ENCODE measurements at regions of chr20 and their contacts with region 1.

Region 1: GRCh38 chr20:36886859-36887751 is 11.2 kb downstream of the TLDC2 start:
- DNase-seq: peak; percentile 83 to 84
- ATAC-seq: peak; percentile 72 to 91 (median 87)
- H3K4me3 ChIP-seq: peak overlapping the region in 1 of 10 donors; percentile 4
- H3K27ac ChIP-seq: peak overlapping the region in 2 of 10 donors; percentile 15 to 30
- H3K4me1 ChIP-seq: peaks cover 0 to 13% (median 11%) of the 10 kb centered on the region in 9 donors
- H3K27me3 ChIP-seq: no peaks in the 10 kb centered on the region
- CTCF ChIP-seq: peak; percentile 83 to 98 (median 96)

Region 2: GRCh38 chr20:36550797-36551299 is 336.3 kb before region 1 on chr20:
- intact Hi-C with region 1: loop called in 2 of 10 experiments (anchors 2 to 10 kb)
- DNase-seq: no peak
- ATAC-seq: peak; percentile 35 to 54 (median 46)
- H3K4me3 ChIP-seq: no peak overlapping the region
- H3K27ac ChIP-seq: peak overlapping the region in 9 of 10 donors; percentile 14 to 71 (median 51)
- H3K4me1 ChIP-seq: peaks cover 0 to 52% (median 16%) of the 10 kb centered on the region in 9 donors
- H3K27me3 ChIP-seq: no peaks in the 10 kb centered on the region
- CTCF ChIP-seq: no peak

Region 3: DNA sequence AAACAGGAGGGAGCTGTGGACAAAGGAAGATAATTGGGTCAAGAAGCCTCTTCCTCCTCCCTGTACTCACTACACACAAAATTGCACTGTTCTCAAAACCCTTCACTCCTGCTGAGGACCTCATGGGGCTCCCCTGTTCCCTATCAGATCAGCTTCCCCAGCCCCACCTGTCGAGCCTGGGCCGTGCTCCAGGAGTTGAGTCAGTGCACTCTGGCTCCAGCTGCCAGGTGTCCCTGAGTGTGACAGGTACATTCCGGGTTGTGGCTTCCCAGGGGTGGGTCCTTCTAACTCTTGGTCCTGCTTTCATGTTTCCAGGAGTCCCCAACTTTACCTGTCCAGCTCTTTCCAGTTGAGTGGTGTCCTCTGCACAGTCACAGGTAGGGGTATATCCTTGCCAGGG is 273.1 kb before region 1 on chr20:
- intact Hi-C with region 1: loop called in 4 of 10 experiments (anchors 5 to 10 kb)
- DNase-seq: no peak
- ATAC-seq: no peak
- H3K4me3 ChIP-seq: no peak overlapping the region
- H3K27ac ChIP-seq: no peak overlapping the region
- H3K4me1 ChIP-seq: peaks cover 0 to 7% (median 0%) of the 10 kb centered on the region in 9 donors
- H3K27me3 ChIP-seq: no peaks in the 10 kb centered on the region
- CTCF ChIP-seq: no peak

Region 4: GRCh38 chr20:36666181-36666740 is 220.8 kb before region 1 on chr20:
- intact Hi-C with region 1: loop called in 1 of 10 experiments (anchors 10 kb)
- DNase-seq: no peak
- ATAC-seq: peak in 1 of 8 donors; percentile 55
- H3K4me3 ChIP-seq: no peak overlapping the region
- H3K27ac ChIP-seq: no peak overlapping the region
- H3K4me1 ChIP-seq: peaks cover 0 to 3% (median 0%) of the 10 kb centered on the region in 9 donors
- H3K27me3 ChIP-seq: no peaks in the 10 kb centered on the region
- CTCF ChIP-seq: peak in 4 of 9 donors; percentile 24 to 42 (median 30)

Region 5: GRCh38 chr20:36792422-36792821 is 94.7 kb before region 1 on chr20:
- intact Hi-C with region 1: loop called in 2 of 10 experiments (anchors 5 kb)
- DNase-seq: peak in 1 of 2 donors; percentile 45
- ATAC-seq: peak in 7 of 8 donors; percentile 30 to 83 (median 57)
- H3K4me3 ChIP-seq: no peak overlapping the region
- H3K27ac ChIP-seq: no peak overlapping the region
- H3K4me1 ChIP-seq: peaks cover 0 to 18% (median 5%) of the 10 kb centered on the region in 9 donors
- H3K27me3 ChIP-seq: no peaks in the 10 kb centered on the region
- CTCF ChIP-seq: peak in 8 of 9 donors; percentile 26 to 62 (median 46)